ENCODE measurements at regions of chr4 and their contacts with region 1.

Region 1: DNA sequence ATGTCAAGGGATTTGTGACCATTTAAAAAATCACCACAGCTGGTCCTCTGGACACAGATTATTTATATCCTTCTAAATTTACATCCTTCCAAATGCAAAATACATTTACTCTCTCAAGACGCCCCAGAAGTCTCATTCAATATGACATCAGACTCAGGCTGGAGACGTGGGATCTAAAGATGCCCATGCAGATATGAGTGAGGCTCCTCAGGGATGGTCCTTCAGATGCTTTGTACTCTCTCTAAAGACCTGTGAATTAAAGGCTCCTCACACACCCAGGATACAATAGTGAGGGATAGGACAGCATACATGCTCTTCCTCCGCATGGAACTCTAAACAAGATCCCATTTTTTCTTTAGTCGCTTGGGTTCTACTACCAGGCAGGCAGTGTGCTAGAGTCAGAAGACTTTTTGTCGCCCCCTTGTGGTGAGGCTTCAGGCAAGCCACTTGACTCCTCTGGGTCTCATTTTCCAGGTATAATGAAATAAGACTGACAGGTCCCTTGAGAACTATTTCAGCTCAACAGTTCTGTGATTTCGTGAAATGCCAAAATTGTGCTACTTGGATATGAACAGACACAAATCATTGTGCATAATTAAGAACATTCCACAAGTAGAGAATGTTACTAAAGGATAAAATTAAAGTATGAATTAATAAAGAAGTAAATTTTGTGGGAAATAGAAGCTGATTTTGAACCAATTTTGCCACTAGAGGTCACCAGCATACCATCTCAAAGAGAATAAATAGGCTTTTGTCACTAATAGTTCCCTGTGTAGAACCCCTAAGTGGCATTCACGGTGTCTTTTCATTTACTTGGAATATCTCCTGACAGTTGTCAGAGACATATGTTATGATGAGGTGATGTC is 13.7 kb upstream of the SCOC start:
- DNase-seq: peak; percentile 86 to 90 (median 87)
- H3K4me3 ChIP-seq: no peak overlapping the region
- H3K27ac ChIP-seq: no peak overlapping the region
- H3K4me1 ChIP-seq: peaks cover 7 to 22% (median 13%) of the 10 kb centered on the region in 4 experiments
- H3K27me3 ChIP-seq: no peaks in the 10 kb centered on the region

Region 2: DNA sequence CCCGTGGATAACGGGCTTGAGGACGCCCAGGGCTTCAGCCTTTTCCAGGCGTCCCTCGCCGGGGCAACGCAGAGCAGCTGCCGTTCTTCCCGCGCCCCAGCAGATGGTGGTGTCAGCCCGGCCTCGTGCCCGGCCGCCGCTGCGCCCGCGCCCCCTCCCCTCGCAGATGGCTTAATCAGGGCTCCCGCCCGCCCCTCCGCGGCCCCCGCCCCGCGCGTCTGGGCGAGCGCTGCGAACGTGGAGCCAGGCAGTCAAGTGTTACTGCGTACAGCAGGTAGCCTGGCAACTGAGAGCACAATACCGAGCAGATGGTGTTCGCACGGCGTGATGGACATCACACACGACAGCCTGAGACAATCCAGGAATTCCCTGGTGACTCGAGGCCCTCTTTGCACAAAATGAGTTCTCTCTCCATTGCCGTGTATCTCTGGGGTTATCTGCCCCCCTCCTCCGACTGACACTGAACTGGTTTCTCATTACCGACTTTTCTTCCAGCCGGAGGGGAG is 624.9 kb before region 1 on chr4:
- CTCF ChIA-PET with region 1: interaction called, 15 read pairs
- POLR2A ChIA-PET with region 1: no interaction called
- DNase-seq: peak; percentile 87 to 97 (median 96)
- H3K4me3 ChIP-seq: peak overlapping the region; percentile 16 to 82 (median 57)
- H3K27ac ChIP-seq: peak overlapping the region in 1 of 2 experiments; percentile 63
- H3K4me1 ChIP-seq: peaks cover 6 to 26% (median 13%) of the 10 kb centered on the region in 4 experiments
- H3K27me3 ChIP-seq: no peaks in the 10 kb centered on the region

Region 3: GRCh38 chr4:140326395-140326993 is 33.3 kb before region 1 on chr4:
- CTCF ChIA-PET with region 1: interaction called, 22 read pairs
- POLR2A ChIA-PET with region 1: no interaction called
- DNase-seq: peak; percentile 59 to 78 (median 76)
- H3K4me3 ChIP-seq: no peak overlapping the region
- H3K27ac ChIP-seq: no peak overlapping the region
- H3K4me1 ChIP-seq: peaks cover 3 to 11% (median 9%) of the 10 kb centered on the region in 4 experiments
- H3K27me3 ChIP-seq: no peaks in the 10 kb centered on the region

Region 4: GRCh38 chr4:140373328-140374129 is 13.7 kb after region 1 on chr4 and contains the start of gene SCOC:
- CTCF ChIA-PET with region 1: interaction called, 35 read pairs
- POLR2A ChIA-PET with region 1: no interaction called
- DNase-seq: peak; percentile 98 to 99 (median 99)
- H3K4me3 ChIP-seq: peak within 1 kb of the TSS; percentile 82 to 100 (median 99)
- H3K27ac ChIP-seq: peak within 1 kb of the TSS; percentile 81 to 92
- H3K4me1 ChIP-seq: peaks cover 3 to 29% (median 16%) of the 10 kb centered on the region in 4 experiments
- H3K27me3 ChIP-seq: no peaks in the 10 kb centered on the region

Region 5: DNA sequence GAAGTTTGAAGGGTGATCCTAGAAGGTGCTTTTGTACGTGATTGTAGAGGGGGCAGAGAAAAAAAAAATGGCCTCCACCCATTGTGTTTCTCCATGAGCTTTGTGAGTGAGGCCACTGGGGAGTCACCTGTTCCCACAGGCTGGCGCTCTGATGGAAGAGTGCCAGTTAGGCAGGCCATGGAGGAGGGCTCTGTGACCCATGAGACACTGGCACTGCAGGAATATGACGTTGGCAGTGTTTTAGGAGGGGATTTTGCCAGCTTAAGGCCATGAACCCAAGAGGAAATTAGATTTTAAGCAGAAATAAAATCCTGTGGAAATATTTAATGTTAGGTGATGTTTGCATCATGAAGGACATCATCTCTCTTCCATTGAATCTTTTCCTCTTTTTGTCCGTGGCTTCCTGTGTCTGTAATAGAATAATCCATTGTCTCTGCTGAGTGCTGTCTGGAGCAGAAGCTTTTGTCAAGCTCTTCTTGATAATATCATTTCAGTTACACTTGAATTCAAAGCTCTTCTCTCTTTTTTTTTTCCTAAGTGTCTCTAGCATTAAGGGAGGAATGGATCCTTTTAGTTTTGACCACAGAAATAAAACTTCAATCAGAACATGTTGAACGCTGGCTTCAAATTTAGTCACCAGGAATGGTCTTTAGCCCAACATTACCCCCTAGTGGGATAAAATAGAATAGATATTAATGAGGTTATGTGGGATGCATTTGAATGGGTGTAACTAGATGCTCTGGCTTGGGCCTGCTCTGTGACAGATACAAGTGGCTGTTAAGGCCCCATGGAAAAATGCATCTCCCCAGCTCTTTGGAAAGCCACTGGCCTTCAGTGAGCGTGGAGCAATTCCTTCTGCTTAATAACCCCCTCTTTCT is 250.0 kb after region 1 on chr4:
- CTCF ChIA-PET with region 1: interaction called, 38 read pairs
- POLR2A ChIA-PET with region 1: no interaction called
- DNase-seq: peak; percentile 50 to 68 (median 61)
- H3K4me3 ChIP-seq: no peak overlapping the region
- H3K27ac ChIP-seq: no peak overlapping the region
- H3K4me1 ChIP-seq: peaks cover 0 to 8% (median 3%) of the 10 kb centered on the region in 4 experiments
- H3K27me3 ChIP-seq: no peaks in the 10 kb centered on the region

Region 6: GRCh38 chr4:140851032-140851636 is 491.3 kb after region 1 on chr4:
- CTCF ChIA-PET with region 1: interaction called, 14 read pairs
- POLR2A ChIA-PET with region 1: no interaction called
- DNase-seq: peak; percentile 75 to 88 (median 84)
- H3K4me3 ChIP-seq: no peak overlapping the region
- H3K27ac ChIP-seq: no peak overlapping the region
- H3K4me1 ChIP-seq: peaks cover 0 to 1% (median 0%) of the 10 kb centered on the region in 4 experiments
- H3K27me3 ChIP-seq: no peaks in the 10 kb centered on the region

Measured in common myeloid progenitor, CD34-positive (primary cell).